Adrenal gland (tissue), 19 donors: ENCODE measurements at regions of chr17 and their contacts with region 1.

Region 1: DNA sequence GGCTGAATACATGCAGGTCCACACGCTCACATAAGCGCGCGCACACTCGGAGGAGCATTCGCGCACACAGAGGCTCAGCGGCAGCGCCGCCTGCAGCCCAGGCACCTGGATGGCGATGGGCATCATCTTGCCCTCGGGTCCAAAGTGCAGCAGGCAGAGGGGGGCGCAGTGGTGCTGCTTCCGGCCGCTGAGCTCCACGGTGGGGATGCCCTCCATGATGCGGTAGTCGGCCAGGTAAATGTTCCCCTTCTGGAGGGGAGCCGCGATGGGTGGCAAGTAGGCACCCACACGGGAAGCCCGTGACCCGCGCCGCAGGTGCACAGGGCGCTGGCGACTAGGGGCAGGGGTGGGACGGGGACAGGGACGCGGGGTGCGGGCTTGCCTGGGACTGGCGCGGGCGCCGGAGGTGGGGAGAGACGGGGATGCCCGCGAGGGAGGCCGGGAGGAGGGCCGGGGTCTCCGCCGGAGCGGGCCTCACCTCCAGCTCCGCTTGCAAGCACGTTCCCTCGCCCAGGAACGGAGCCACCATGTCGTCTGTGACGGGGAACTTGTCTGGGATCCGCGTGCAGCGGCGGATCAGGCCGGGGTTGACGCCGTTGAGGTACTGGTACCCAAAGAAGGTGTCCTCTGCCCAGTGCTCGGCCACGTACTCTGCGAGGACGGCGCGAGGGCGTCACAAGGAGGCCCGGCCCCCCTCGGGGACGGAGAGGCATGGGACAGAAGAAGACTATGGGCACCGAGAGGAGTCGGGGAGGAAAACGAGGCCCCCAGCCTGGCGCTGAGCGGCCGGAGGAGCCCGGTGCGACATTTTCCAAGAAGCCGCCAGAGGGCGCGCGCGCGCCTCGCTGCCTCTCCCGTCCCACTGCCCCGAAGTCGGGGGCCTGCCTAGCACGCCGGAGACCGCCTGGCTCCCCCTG is 8.0 kb downstream of the ALOX12B start:
- DNase-seq: peak; percentile 38 to 74 (median 66)
- H3K4me3 ChIP-seq: peak overlapping the region in 1 of 4 donors; percentile 51
- H3K27ac ChIP-seq: no peak overlapping the region
- H3K4me1 ChIP-seq: peaks cover 0 to 8% of the 10 kb centered on the region in 2 donors
- H3K27me3 ChIP-seq: peaks cover 54% of the 10 kb centered on the region
- CTCF ChIP-seq: peak; percentile 60 to 93 (median 76)
- POLR2A ChIP-seq: no peak

Region 2: GRCh38 chr17:8016632-8017478 is 62.7 kb before region 1 on chr17:
- intact Hi-C with region 1: no loop called
- DNase-seq: peak; percentile 49 to 72 (median 64)
- H3K4me3 ChIP-seq: peak overlapping the region in 2 of 4 donors; percentile 1 to 27
- H3K27ac ChIP-seq: peak overlapping the region in 1 of 5 donors; percentile 45
- H3K4me1 ChIP-seq: peaks cover 12 to 16% of the 10 kb centered on the region in 2 donors
- H3K27me3 ChIP-seq: peaks cover 26% of the 10 kb centered on the region
- CTCF ChIP-seq: peak; percentile 21 to 58 (median 50)
- POLR2A ChIP-seq: no peak

Region 3: DNA sequence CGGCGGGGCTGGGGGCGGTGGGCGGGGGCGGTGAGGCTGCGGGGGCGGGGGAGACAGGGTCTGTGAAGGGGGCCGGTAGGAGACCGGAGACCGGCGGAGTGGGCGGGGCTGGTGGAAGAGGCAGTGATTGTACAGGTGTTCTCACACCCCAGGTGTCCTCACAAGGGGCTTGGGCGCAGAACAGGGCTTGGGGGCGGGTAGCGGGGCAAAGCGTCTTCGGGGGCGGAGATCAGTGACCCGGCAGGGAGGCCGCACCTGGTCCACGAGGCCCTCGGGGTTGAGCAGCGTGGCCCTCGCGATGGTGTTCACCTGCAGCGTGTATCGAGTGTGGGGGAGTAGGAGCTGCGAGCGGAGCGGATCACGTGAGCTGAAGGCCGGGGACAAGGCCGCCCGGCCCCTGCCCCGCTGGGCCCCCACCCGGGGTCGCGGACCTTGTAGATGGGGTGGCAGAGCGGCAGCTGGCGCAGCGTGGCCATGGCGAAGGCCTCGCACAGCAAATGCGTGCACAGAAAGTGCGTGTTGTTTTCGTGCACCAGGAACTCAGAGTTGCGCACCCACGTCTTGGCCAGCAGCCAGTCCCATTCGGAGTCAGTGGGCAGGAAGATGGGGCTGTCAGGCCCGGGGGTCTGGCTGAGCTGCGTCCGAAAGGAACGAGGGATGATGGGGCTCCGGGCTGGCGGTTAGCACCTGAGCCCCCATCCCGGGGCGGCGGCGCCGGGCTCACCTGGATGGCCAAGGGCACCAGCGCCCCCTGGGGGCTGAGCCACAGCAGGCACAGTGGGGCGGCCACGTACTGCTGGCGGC is 30.3 kb after region 1 on chr17:
- intact Hi-C with region 1: loop called (anchors 5 kb)
- DNase-seq: peak in 6 of 7 donors; percentile 46 to 69 (median 61)
- H3K4me3 ChIP-seq: peak overlapping the region in 1 of 4 donors; percentile 13
- H3K27ac ChIP-seq: no peak overlapping the region
- H3K4me1 ChIP-seq: peaks cover 0 to 6% of the 10 kb centered on the region in 2 donors
- H3K27me3 ChIP-seq: peaks cover 33% of the 10 kb centered on the region
- CTCF ChIP-seq: peak; percentile 60 to 82 (median 70)
- POLR2A ChIP-seq: no peak

Region 4: DNA sequence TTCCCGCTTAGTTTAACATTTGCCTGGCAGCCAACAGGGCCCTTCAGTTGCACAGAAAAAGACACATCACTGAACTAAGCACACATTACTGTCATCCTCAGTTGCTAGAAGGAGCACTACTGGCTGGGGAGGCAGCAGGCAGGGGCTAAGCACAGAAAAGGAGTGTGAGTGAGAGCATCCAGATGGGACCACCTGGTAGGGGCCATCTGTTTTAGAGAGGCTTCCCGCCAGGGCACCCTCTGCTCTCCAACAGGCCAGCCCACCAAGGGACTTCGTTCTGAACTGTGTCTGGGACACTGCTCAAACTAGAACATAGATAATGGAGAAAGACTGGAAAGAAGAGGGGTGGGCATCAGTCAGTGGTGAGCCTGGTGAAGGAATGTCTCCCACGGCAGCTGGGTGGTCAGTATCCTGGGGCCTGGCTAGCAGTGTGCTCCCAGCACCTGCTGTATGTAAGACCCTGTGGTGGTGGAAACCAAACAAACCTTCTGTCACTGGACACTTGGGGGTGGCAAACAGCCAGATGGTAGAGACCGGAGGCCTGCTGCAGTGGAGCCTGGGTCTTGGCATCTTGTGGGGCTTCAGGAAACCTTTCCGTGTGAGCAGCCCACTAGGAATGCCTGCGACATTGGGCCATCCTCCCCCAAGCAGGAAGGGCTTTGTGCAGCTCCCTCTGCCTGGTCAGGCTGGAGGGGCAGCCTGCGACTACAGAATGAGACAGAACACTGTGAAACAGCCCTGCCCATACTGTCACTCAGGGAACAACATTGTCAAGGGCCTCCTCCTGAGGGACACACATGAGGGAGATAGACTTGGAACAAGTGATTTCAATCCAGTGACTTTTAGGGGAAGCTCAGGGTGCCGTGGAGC is 196.1 kb after region 1 on chr17:
- intact Hi-C with region 1: no loop called
- DNase-seq: no peak
- H3K4me3 ChIP-seq: no peak overlapping the region
- H3K27ac ChIP-seq: no peak overlapping the region
- H3K4me1 ChIP-seq: no peaks in the 10 kb centered on the region
- H3K27me3 ChIP-seq: no peaks in the 10 kb centered on the region
- CTCF ChIP-seq: no peak
- POLR2A ChIP-seq: no peak

Region 5: GRCh38 chr17:8300627-8301242 is 221.2 kb after region 1 on chr17:
- intact Hi-C with region 1: loop called in 1 of 2 experiments (anchors 10 kb)
- DNase-seq: peak in 5 of 7 donors; percentile 60 to 71 (median 67)
- H3K4me3 ChIP-seq: no peak overlapping the region
- H3K27ac ChIP-seq: no peak overlapping the region
- H3K4me1 ChIP-seq: no peaks in the 10 kb centered on the region
- H3K27me3 ChIP-seq: no peaks in the 10 kb centered on the region
- CTCF ChIP-seq: peak; percentile 77 to 87 (median 84)
- POLR2A ChIP-seq: no peak